Posterior cingulate gyrus (tissue), 11 donors: ENCODE measurements at regions of chr5 and their contacts with region 1.

Region 1: GRCh38 chr5:73792687-73793320 is 166.8 kb downstream of the ARHGEF28 start:
- DNase-seq: peak; percentile 50 to 96 (median 79)

Region 2: GRCh38 chr5:73591102-73591695 is 201.6 kb before region 1 on chr5:
- intact Hi-C with region 1: loop called (anchors 1 kb)
- DNase-seq: peak in 2 of 10 donors; percentile 24 to 26

Region 3: GRCh38 chr5:73853091-73853490 is 60.3 kb after region 1 on chr5:
- intact Hi-C with region 1: no loop called
- DNase-seq: no peak

Region 4: GRCh38 chr5:74294231-74294705 is 501.5 kb after region 1 on chr5:
- intact Hi-C with region 1: no loop called
- DNase-seq: peak; percentile 18 to 93 (median 63)